Activated CD4-positive, alpha-beta memory T cell treated with anti-CD3 and anti-CD28 coated beads for 36 hours (primary cell): ENCODE measurements at regions of chr7 and their contacts with region 1.

Region 1: DNA sequence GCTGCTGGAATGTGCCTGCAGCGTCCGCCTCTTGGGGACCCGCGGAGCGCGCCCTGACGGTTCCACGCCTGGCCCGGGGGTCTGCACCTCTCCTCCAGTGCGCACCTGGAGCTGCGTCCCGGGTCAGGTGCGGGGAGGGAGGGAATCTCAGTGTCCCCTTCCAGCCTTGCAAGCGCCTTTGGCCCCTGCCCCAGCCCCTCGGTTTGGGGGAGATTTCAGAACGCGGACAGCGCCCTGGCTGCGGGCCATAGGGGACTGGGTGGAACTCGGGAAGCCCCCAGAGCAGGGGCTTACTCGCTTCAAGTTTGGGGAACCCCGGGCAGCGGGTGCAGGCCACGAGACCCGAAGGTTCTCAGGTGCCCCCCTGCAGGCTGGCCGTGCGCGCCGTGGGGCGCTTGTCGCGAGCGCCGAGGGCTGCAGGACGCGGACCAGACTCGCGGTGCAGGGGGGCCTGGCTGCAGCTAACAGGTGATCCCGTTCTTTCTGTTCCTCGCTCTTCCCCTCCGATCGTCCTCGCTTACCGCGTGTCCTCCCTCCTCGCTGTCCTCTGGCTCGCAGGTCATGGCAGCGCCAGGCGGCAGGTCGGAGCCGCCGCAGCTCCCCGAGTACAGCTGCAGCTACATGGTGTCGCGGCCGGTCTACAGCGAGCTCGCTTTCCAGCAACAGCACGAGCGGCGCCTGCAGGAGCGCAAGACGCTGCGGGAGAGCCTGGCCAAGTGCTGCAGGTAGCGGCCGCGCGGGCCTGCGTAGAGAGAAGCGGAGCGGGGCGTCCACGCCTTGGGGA is 645 bp downstream of the SLC26A4 start:
- DNase-seq: peak; percentile 70
- H3K4me3 Mint-ChIP-seq: peak overlapping the region; percentile 84
- H3K27ac Mint-ChIP-seq: peak overlapping the region; percentile 93
- H3K4me1 Mint-ChIP-seq: peaks cover 30% of the 10 kb centered on the region
- H3K27me3 Mint-ChIP-seq: peaks cover 11% of the 10 kb centered on the region

Region 2: GRCh38 chr7:107277331-107277730 is 383.9 kb before region 1 on chr7:
- CTCF ChIA-PET with region 1: no interaction called
- POLR2A ChIA-PET with region 1: no interaction called
- intact Hi-C with region 1: no loop called
- DNase-seq: no peak
- H3K4me3 Mint-ChIP-seq: no peak overlapping the region
- H3K27ac Mint-ChIP-seq: no peak overlapping the region
- H3K4me1 Mint-ChIP-seq: no peaks in the 10 kb centered on the region
- H3K27me3 Mint-ChIP-seq: no peaks in the 10 kb centered on the region

Region 3: DNA sequence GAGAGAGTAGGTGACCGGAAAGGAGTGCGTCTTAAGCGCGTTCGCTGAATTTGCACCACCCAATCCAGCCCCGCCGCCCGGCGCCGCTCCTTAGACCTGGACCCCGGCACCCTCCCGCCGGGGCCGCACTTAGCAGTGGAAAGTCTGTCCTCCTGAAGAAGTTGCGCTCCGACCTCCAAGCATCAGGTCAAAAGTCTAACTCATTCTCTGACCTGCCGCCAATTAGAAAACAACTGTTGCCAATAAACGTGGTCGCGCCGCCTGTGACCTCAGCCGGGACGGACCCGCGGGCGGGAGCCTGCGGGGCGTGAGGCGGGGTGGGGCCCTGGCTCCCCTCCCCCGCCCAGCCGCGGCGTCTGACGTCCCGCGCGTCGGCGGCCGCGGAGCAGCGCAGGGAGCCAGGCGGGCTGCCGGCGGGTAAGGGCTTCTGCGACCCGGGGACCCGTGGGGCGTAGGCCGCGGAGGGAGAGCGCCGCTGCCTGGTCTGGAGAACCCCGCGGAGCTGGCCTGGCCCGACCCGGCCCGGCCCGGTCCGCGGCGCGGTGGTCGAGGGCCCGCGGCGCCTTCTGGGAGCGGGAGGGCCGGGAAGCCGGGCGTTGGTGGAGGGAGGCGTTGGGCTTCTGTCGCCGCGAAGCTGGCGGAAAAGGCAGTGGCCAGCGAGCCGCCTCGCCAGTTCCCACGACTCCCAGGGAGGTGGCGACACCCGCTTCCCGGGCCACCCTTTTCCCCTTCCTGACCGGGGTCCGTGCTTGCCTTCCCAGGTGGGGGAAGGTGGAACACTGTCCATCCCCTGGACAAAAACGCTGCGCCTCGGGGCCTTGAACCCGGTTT is 81.2 kb before region 1 on chr7 and contains the start of gene BCAP29:
- CTCF ChIA-PET with region 1: interaction called, 6 read pairs
- POLR2A ChIA-PET with region 1: no interaction called
- intact Hi-C with region 1: loop called (anchors 1 kb)
- DNase-seq: peak; percentile 76
- H3K4me3 Mint-ChIP-seq: peak within 1 kb of the TSS; percentile 87
- H3K27ac Mint-ChIP-seq: peak within 1 kb of the TSS; percentile 78
- H3K4me1 Mint-ChIP-seq: peaks cover 19% of the 10 kb centered on the region
- H3K27me3 Mint-ChIP-seq: no peaks in the 10 kb centered on the region
- total RNA-seq, gene BCAP29: 42.3 to 42.9 TPM

Region 4: DNA sequence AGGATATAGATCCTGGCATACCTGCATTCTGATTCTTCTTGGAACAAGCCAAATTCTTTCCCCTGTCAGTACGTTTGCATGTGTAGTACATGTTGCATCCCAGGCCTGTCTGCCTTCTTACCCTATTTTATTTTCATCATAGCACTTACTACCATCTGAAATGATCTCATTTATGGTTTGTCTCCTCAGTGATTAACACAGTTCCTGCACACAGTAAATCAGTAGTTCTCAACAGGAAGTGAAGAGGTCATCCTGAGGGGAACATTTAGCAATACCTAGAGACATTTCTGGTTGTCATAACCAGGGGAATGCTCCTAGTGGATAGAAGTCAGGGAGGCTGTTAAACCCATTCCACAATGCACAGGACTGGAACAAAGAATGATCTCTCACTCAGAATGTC is 38.8 kb before region 1 on chr7:
- CTCF ChIA-PET with region 1: interaction called, 3 read pairs
- POLR2A ChIA-PET with region 1: no interaction called
- intact Hi-C with region 1: loop called (anchors 1 kb)
- DNase-seq: no peak
- H3K4me3 Mint-ChIP-seq: no peak overlapping the region
- H3K27ac Mint-ChIP-seq: no peak overlapping the region
- H3K4me1 Mint-ChIP-seq: no peaks in the 10 kb centered on the region
- H3K27me3 Mint-ChIP-seq: no peaks in the 10 kb centered on the region

Region 5: GRCh38 chr7:107638594-107638993 is 22.7 kb before region 1 on chr7:
- CTCF ChIA-PET with region 1: no interaction called
- POLR2A ChIA-PET with region 1: no interaction called
- intact Hi-C with region 1: loop called (anchors 2 kb)
- DNase-seq: no peak
- H3K4me3 Mint-ChIP-seq: no peak overlapping the region
- H3K27ac Mint-ChIP-seq: no peak overlapping the region
- H3K4me1 Mint-ChIP-seq: peaks cover 8% of the 10 kb centered on the region
- H3K27me3 Mint-ChIP-seq: peaks cover 16% of the 10 kb centered on the region

Region 6: DNA sequence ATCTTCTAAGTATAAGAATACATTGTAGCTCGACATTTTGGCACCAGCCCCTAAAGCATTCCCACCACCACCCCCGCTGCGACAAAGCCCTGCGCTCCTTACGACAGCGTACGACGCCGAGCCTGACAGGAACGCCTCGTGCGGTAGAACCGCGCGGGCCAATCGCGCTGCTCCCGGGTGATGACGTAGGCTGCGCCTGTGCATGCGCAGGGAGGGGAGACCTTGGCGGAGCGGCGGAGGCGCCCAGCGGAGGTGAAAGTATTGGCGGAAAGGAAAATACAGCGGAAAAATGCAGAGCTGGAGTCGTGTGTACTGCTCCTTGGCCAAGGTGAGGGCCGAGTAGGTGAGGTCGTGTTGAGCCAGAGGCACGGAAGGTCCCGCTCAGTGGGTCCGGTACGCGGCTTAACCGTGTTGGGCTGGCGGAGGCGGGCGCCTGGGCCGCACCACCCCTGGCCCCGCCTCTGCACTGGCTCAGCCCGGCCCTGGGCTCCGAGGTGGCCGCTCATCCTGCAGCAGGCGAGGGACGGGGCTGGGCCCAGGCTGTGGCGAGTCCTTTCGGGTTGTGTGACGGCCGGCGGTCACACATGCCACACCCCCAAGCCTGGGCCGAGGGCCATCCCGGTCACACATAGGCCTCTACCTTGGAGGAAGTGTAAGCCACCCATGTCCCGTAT is 229.8 kb after region 1 on chr7 and contains the start of gene DLD:
- CTCF ChIA-PET with region 1: no interaction called
- POLR2A ChIA-PET with region 1: interaction called, 3 read pairs
- intact Hi-C with region 1: loop called (anchors 2 kb)
- DNase-seq: peak; percentile 97
- H3K4me3 Mint-ChIP-seq: peak within 1 kb of the TSS; percentile 89
- H3K27ac Mint-ChIP-seq: peak within 1 kb of the TSS; percentile 94
- H3K4me1 Mint-ChIP-seq: peaks cover 36% of the 10 kb centered on the region
- H3K27me3 Mint-ChIP-seq: no peaks in the 10 kb centered on the region
- total RNA-seq, gene DLD: 103 to 116 TPM